GM10248 (cell line): ENCODE measurements at regions of chr5 and their contacts with region 1.

Region 1: GRCh38 chr5:38285226-38285625 is 26.9 kb downstream of the EGFLAM start:
- DNase-seq: no peak
- CTCF ChIP-seq: no peak

Region 2: GRCh38 chr5:38265546-38266179 is 19.6 kb before region 1 on chr5:
- CTCF ChIA-PET with region 1: interaction called, 43 read pairs
- POLR2A ChIA-PET with region 1: no interaction called
- DNase-seq: peak; percentile 54
- CTCF ChIP-seq: peak; percentile 78

Region 3: GRCh38 chr5:39015743-39016586 is 730.7 kb after region 1 on chr5:
- CTCF ChIA-PET with region 1: no interaction called
- POLR2A ChIA-PET with region 1: no interaction called
- DNase-seq: no peak
- CTCF ChIP-seq: no peak